ENCODE measurements at regions of chr16 and their contacts with region 1.

Region 1: GRCh38 chr16:77585379-77586251 is 136.7 kb upstream of the NUDT7 start:
- DNase-seq: no peak
- H3K4me3 ChIP-seq: no peak overlapping the region
- H3K27ac ChIP-seq: no peak overlapping the region
- H3K4me1 ChIP-seq: no peaks in the 10 kb centered on the region
- H3K27me3 ChIP-seq: no peaks in the 10 kb centered on the region
- CTCF ChIP-seq: no peak

Region 2: GRCh38 chr16:77236063-77236511 is 349.5 kb before region 1 on chr16:
- intact Hi-C with region 1: loop called (anchors 5 kb)
- DNase-seq: peak; percentile 91 to 92 (median 92)
- H3K4me3 ChIP-seq: peak overlapping the region in 2 of 3 donors; percentile 28 to 42
- H3K27ac ChIP-seq: no peak overlapping the region
- H3K4me1 ChIP-seq: peaks cover 0 to 3% (median 0%) of the 10 kb centered on the region in 3 donors
- H3K27me3 ChIP-seq: no peaks in the 10 kb centered on the region
- CTCF ChIP-seq: peak; percentile 100

Region 3: GRCh38 chr16:77468831-77469230 is 116.8 kb before region 1 on chr16:
- intact Hi-C with region 1: no loop called
- DNase-seq: no peak
- H3K4me3 ChIP-seq: no peak overlapping the region
- H3K27ac ChIP-seq: no peak overlapping the region
- H3K4me1 ChIP-seq: no peaks in the 10 kb centered on the region
- H3K27me3 ChIP-seq: no peaks in the 10 kb centered on the region
- CTCF ChIP-seq: no peak

Region 4: DNA sequence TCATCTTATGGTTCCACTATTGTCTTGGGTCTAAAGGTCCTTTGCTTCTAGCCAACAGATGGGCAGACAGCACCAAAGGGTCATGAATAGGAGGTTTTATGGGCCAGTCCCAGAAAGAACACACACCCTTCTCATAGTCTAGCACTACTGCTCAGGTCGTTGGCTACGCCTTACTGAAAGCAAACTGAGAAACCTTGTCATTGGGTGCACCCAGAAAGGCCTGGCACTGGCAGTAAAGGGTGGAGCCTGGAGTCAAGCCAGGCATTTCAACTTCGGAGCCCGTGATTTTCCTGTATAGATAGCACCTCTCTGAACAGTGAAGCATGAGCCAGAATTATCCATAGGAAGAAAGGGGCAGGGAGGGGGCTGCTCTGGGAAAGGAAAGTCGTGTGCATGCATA is 277.6 kb after region 1 on chr16:
- intact Hi-C with region 1: no loop called
- DNase-seq: no peak
- H3K4me3 ChIP-seq: no peak overlapping the region
- H3K27ac ChIP-seq: no peak overlapping the region
- H3K4me1 ChIP-seq: no peaks in the 10 kb centered on the region
- H3K27me3 ChIP-seq: no peaks in the 10 kb centered on the region
- CTCF ChIP-seq: no peak

Measured in kidney (tissue), 22 donors.